Cardiac septum (tissue), 1 donor: ENCODE measurements at regions of chr5 and their contacts with region 1.

Region 1: GRCh38 chr5:102754767-102755431 is at the start of gene PAM:
- DNase-seq: peak; percentile 91
- total RNA-seq, gene PAM: 1,080 TPM

Region 2: GRCh38 chr5:102296178-102296817 is 458.6 kb before region 1 on chr5 and contains the start of gene SLCO4C1:
- intact Hi-C with region 1: no loop called
- DNase-seq: peak; percentile 95
- total RNA-seq, gene SLCO4C1: 0.19 TPM

Region 3: GRCh38 chr5:103119765-103120606 is 365.1 kb after region 1 on chr5 and contains the starts of genes GIN1 and PPIP5K2:
- intact Hi-C with region 1: loop called (anchors 2 kb)
- DNase-seq: peak; percentile 99
- total RNA-seq, gene GIN1: 14.8 TPM
- total RNA-seq, gene PPIP5K2: 31.1 TPM